WTC11 (cell line): ENCODE measurements at regions of chr2 and their contacts with region 1.

Region 1: GRCh38 chr2:84925724-84926376 is 20.4 kb downstream of the TMSB10 start:
- DNase-seq: peak; percentile 99
- ATAC-seq: peak; percentile 86
- H3K4me3 Mint-ChIP-seq: peak overlapping the region; percentile 69
- H3K27ac Mint-ChIP-seq: no peak overlapping the region
- H3K4me1 Mint-ChIP-seq: peaks cover 23% of the 10 kb centered on the region
- H3K27me3 Mint-ChIP-seq: peaks cover 12% of the 10 kb centered on the region
- CTCF ChIP-seq: peak; percentile 99

Region 2: GRCh38 chr2:84741296-84741765 is 184.5 kb before region 1 on chr2:
- CTCF ChIA-PET with region 1: interaction called, 14 read pairs
- POLR2A ChIA-PET with region 1: no interaction called
- DNase-seq: peak; percentile 65
- ATAC-seq: peak; percentile 100
- H3K4me3 Mint-ChIP-seq: no peak overlapping the region
- H3K27ac Mint-ChIP-seq: no peak overlapping the region
- H3K4me1 Mint-ChIP-seq: peaks cover 4% of the 10 kb centered on the region; the same call in 1 of the 2 replicates
- H3K27me3 Mint-ChIP-seq: peaks cover 11% of the 10 kb centered on the region
- CTCF ChIP-seq: 0 out of 2 replicates have a peak, but pooled peaks have one; percentile 33

Region 3: GRCh38 chr2:84881581-84882414 is 44.1 kb before region 1 on chr2:
- CTCF ChIA-PET with region 1: interaction called, 62 read pairs
- POLR2A ChIA-PET with region 1: no interaction called
- DNase-seq: peak; percentile 85
- ATAC-seq: peak; percentile 63
- H3K4me3 Mint-ChIP-seq: peak overlapping the region; percentile 72
- H3K27ac Mint-ChIP-seq: no peak overlapping the region
- H3K4me1 Mint-ChIP-seq: peaks cover 10% of the 10 kb centered on the region
- H3K27me3 Mint-ChIP-seq: peaks cover 88% of the 10 kb centered on the region
- CTCF ChIP-seq: peak; percentile 37; the same call in 1 of the 2 replicates

Region 4: GRCh38 chr2:84912984-84913383 is 12.9 kb before region 1 on chr2:
- CTCF ChIA-PET with region 1: interaction called, 44 read pairs
- POLR2A ChIA-PET with region 1: no interaction called
- DNase-seq: no peak
- ATAC-seq: no peak
- H3K4me3 Mint-ChIP-seq: no peak overlapping the region
- H3K27ac Mint-ChIP-seq: no peak overlapping the region
- H3K4me1 Mint-ChIP-seq: peaks cover 4% of the 10 kb centered on the region
- H3K27me3 Mint-ChIP-seq: no peaks in the 10 kb centered on the region
- CTCF ChIP-seq: no peak

Region 5: GRCh38 chr2:84958135-84959044 is 32.5 kb after region 1 on chr2:
- CTCF ChIA-PET with region 1: interaction called, 67 read pairs
- POLR2A ChIA-PET with region 1: interaction called, 13 read pairs
- DNase-seq: peak; percentile 86
- ATAC-seq: peak; percentile 79
- H3K4me3 Mint-ChIP-seq: peak overlapping the region; percentile 70
- H3K27ac Mint-ChIP-seq: peak overlapping the region; percentile 100
- H3K4me1 Mint-ChIP-seq: peaks cover 73% of the 10 kb centered on the region
- H3K27me3 Mint-ChIP-seq: no peaks in the 10 kb centered on the region
- CTCF ChIP-seq: no peak

Region 6: DNA sequence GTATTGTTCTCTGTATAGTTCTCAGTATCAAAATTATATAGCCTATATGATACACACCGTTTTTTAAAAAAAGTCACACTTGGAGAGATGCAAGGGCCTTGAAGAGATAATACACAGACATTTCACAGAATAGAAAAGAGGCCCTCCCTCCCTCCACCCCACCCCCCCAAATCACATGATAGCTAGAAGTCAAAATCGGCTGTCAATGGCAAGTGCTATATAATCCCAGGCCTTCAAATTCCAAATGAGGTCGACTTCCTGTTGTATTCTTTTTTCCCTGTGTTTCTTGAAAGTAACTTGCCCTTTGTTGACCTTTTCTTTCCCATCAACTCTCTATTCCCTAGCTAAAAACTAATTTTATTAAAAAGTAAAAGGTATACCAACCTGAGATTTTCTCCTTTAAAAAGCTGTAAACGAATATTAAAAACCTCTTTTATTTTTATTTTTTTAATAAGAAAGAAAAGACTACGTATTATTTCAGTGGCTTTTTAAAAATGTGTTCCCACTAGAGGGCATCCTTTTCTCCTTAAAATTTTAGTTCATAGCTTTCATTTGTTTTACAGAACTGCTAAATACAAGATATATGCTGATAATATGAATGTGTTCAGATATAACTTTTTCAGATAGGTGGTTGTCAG is 91.7 kb after region 1 on chr2:
- CTCF ChIA-PET with region 1: interaction called, 36 read pairs
- POLR2A ChIA-PET with region 1: interaction called, 3 read pairs
- DNase-seq: no peak
- ATAC-seq: no peak
- H3K4me3 Mint-ChIP-seq: no peak overlapping the region
- H3K27ac Mint-ChIP-seq: 0 out of 2 replicates have a peak overlapping the region, but pooled peaks have one; percentile 29
- H3K4me1 Mint-ChIP-seq: peaks cover 58% of the 10 kb centered on the region
- H3K27me3 Mint-ChIP-seq: no peaks in the 10 kb centered on the region
- CTCF ChIP-seq: no peak; the same call in 1 of the 2 replicates

Region 7: GRCh38 chr2:85061896-85062295 is 136.0 kb after region 1 on chr2:
- CTCF ChIA-PET with region 1: interaction called, 26 read pairs
- POLR2A ChIA-PET with region 1: no interaction called
- DNase-seq: no peak
- ATAC-seq: no peak
- H3K4me3 Mint-ChIP-seq: no peak overlapping the region
- H3K27ac Mint-ChIP-seq: no peak overlapping the region
- H3K4me1 Mint-ChIP-seq: peaks cover 32% of the 10 kb centered on the region
- H3K27me3 Mint-ChIP-seq: peaks cover 21% of the 10 kb centered on the region
- CTCF ChIP-seq: no peak